ENCODE measurements at regions of chr5 and their contacts with region 1.

Region 1: GRCh38 chr5:14264604-14265316 is 121.6 kb downstream of the TRIO start:
- DNase-seq: peak; percentile 89
- ATAC-seq: peak; percentile 97
- H3K4me3 ChIP-seq: peak overlapping the region; percentile 5 to 60 (median 32)
- H3K4me3 Mint-ChIP-seq: peak overlapping the region; percentile 82
- H3K27ac ChIP-seq: peak overlapping the region in 1 of 2 donors; percentile 21
- H3K27ac Mint-ChIP-seq: peak overlapping the region; percentile 88
- H3K4me1 ChIP-seq: peaks cover 22 to 23% of the 10 kb centered on the region in 2 donors
- H3K4me1 Mint-ChIP-seq: peaks cover 74% of the 10 kb centered on the region
- H3K27me3 ChIP-seq: no peaks in the 10 kb centered on the region
- H3K27me3 Mint-ChIP-seq: no peaks in the 10 kb centered on the region
- CTCF ChIP-seq: no peak

Region 2: GRCh38 chr5:14011089-14012004 is 253.4 kb before region 1 on chr5:
- CTCF ChIA-PET with region 1: interaction called, 3 read pairs
- POLR2A ChIA-PET with region 1: no interaction called
- intact Hi-C with region 1: loop called (anchors 1 kb)
- DNase-seq: peak; percentile 85
- ATAC-seq: peak; percentile 87
- H3K4me3 ChIP-seq: peak overlapping the region; percentile 61 to 81 (median 72)
- H3K4me3 Mint-ChIP-seq: peak overlapping the region; percentile 91
- H3K27ac ChIP-seq: peak overlapping the region in 1 of 2 donors; percentile 14
- H3K27ac Mint-ChIP-seq: peak overlapping the region; percentile 60
- H3K4me1 ChIP-seq: peaks cover 5 to 8% of the 10 kb centered on the region in 2 donors
- H3K4me1 Mint-ChIP-seq: peaks cover 9% of the 10 kb centered on the region
- H3K27me3 ChIP-seq: peaks cover 0 to 16% (median 4%) of the 10 kb centered on the region in 4 experiments
- H3K27me3 Mint-ChIP-seq: peaks cover 28% of the 10 kb centered on the region
- CTCF ChIP-seq: no peak

Region 3: DNA sequence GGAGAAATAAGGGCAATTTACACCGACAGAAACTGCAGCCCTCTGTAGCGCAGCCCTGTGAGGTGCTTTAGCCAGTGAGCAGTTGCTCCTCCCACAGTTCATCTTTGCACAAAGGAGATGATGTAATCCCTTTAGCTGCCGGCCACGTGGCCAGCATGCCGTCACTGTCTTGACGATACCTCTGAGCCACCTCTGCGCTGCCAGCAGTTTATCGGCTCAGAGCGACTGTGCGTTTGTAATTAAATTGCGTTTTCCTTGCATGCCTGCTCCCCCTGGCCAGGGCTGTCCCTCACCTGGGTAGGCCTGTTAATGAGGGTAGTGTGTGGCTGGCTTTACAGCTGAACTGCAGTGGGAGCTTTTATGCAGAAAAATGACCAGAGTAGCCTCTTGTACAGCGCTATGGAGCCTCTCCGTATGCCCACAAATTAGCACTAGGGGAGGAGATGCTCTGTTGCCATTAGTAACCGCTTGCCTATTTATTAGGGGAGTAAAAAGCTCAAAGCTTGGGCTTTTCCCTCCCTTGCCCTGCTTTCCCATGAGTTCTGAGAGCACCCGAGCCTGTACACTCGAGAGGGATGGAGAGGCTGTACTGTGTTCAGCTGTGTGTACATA is 14.6 kb before region 1 on chr5:
- CTCF ChIA-PET with region 1: interaction called, 32 read pairs
- POLR2A ChIA-PET with region 1: interaction called, 3 read pairs
- intact Hi-C with region 1: loop called (anchors 1 kb)
- DNase-seq: peak; percentile 35
- ATAC-seq: peak; percentile 15
- H3K4me3 ChIP-seq: no peak overlapping the region
- H3K4me3 Mint-ChIP-seq: peak overlapping the region; percentile 68
- H3K27ac ChIP-seq: peak overlapping the region; percentile 71 to 75
- H3K27ac Mint-ChIP-seq: peak overlapping the region; percentile 91
- H3K4me1 ChIP-seq: peaks cover 37 to 40% of the 10 kb centered on the region in 2 donors
- H3K4me1 Mint-ChIP-seq: peaks cover 83% of the 10 kb centered on the region
- H3K27me3 ChIP-seq: no peaks in the 10 kb centered on the region
- H3K27me3 Mint-ChIP-seq: no peaks in the 10 kb centered on the region
- CTCF ChIP-seq: no peak